H1 (cell line): ENCODE measurements at regions of chr9 and their contacts with region 1.

Region 1: DNA sequence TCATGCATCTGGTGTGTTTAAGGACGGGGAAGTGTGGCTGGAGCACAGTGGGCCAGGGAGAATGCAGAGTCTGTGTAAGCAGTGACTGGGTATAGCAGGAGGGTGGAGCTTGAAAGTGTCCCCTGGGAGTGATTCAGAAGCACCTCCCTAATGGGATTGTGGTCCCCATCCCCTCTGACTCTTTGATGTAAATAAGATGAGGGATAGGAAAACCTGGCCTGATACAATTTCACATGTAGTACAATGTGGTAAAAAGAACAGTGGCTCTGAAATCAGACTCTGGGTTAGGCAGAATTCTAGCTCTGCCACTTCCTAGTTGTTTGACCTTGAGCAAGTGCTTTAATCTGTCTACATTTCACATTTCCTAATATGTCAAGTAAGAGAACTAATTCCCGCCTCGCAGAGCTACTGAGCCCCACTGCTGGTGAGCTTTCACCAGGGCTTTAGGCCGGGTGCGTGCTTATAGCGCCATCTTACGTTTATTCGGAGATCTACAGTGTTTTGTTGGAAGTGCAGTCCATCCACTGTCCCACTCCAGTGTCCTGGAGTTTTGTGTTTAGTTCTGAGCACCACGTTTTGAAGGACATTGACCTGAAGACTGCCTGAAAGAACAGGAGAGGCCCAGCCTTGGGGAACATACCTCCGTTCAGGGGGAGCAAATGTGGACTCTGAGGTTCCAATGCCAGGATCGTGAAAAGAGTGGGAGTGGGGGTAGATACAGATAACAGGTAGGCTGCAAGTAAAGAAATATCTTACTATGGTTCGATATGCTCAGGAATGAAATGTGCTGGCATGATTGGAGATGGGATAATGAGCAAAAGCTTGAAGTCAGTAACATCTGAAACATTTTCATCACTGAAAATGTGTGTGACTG is 51.2 kb upstream of the TESK1 start:
- DNase-seq: peak in 1 of 2 experiments; percentile 72
- H3K4me3 ChIP-seq: no peak overlapping the region
- H3K27ac ChIP-seq: no peak overlapping the region
- H3K4me1 ChIP-seq: peaks cover 0 to 4% (median 0%) of the 10 kb centered on the region in 4 experiments; a peak in 2 of 7 replicates
- H3K27me3 ChIP-seq: no peaks in the 10 kb centered on the region
- CTCF ChIP-seq: peak; percentile 68 to 97 (median 92)
- EP300 ChIP-seq: no peak
- POLR2A ChIP-seq: no peak
- RAD21 ChIP-seq: peak; percentile 99 to 100

Region 2: DNA sequence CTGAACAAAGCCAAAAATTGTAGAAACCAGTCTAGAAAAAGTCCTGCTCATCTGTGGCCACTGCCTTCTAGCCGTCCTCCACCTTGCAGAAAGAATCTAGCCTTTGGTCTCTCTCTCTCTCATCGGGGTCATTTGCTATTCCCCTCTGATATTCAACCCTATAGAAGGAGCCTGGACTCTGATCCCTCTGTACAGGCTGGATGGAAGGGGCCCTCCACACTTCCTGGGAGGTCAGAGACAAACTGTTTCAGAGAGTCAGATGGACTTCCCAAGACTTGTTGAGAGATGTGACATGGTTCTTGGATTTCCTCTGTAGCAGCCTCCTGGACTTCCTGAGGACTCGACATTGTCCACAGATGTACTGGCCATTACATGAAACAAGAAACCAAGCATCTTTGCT is 149.0 kb before region 1 on chr9:
- CTCF ChIA-PET with region 1: no interaction called
- POLR2A ChIA-PET with region 1: no interaction called
- DNase-seq: peak in 1 of 2 experiments; percentile 10
- H3K4me3 ChIP-seq: no peak overlapping the region
- H3K27ac ChIP-seq: no peak overlapping the region
- H3K4me1 ChIP-seq: peaks cover 0 to 7% (median 5%) of the 10 kb centered on the region in 4 experiments; a peak in 5 of 7 replicates
- H3K27me3 ChIP-seq: no peaks in the 10 kb centered on the region
- CTCF ChIP-seq: no peak
- EP300 ChIP-seq: no peak
- POLR2A ChIP-seq: no peak
- RAD21 ChIP-seq: no peak

Region 3: GRCh38 chr9:35452481-35452880 is 101.4 kb before region 1 on chr9:
- CTCF ChIA-PET with region 1: interaction called, 19 read pairs
- POLR2A ChIA-PET with region 1: no interaction called
- DNase-seq: no peak
- H3K4me3 ChIP-seq: no peak overlapping the region
- H3K27ac ChIP-seq: no peak overlapping the region
- H3K4me1 ChIP-seq: peaks cover 0 to 3% (median 0%) of the 10 kb centered on the region in 4 experiments; a peak in 1 of 7 replicates
- H3K27me3 ChIP-seq: no peaks in the 10 kb centered on the region
- CTCF ChIP-seq: peak; percentile 17 to 63 (median 20); a peak in 3 of 4 replicates
- EP300 ChIP-seq: no peak
- POLR2A ChIP-seq: no peak
- RAD21 ChIP-seq: peak; percentile 29 to 42

Region 4: GRCh38 chr9:35481347-35481975 is 72.4 kb before region 1 on chr9:
- CTCF ChIA-PET with region 1: interaction called, 181 read pairs
- POLR2A ChIA-PET with region 1: no interaction called
- DNase-seq: peak in 1 of 2 experiments; percentile 65
- H3K4me3 ChIP-seq: no peak overlapping the region
- H3K27ac ChIP-seq: no peak overlapping the region
- H3K4me1 ChIP-seq: peaks cover 0 to 3% (median 1%) of the 10 kb centered on the region in 4 experiments; a peak in 1 of 7 replicates
- H3K27me3 ChIP-seq: no peaks in the 10 kb centered on the region
- CTCF ChIP-seq: peak; percentile 66 to 82 (median 75)
- EP300 ChIP-seq: no peak
- POLR2A ChIP-seq: no peak
- RAD21 ChIP-seq: peak; percentile 87 to 90

Region 5: DNA sequence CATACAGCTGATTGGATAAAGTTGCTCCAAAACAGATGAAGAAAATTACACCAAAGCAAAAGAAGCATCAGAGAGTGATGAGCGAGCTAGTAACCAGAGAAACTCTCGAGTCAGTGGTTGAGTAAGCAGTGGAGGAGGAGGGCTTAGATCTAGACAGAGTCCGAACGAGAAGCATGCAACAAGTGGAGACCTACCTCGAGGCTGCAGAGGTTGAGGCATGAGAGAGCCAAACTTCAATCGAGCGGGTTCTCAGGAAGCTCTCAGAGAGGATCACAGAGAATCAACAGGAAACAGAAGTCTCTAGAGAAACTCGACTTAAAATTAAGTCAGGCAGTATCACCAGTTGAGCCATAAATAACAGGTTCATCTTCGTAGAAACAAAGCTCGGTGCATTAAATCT is 57.9 kb before region 1 on chr9:
- CTCF ChIA-PET with region 1: interaction called, 26 read pairs
- POLR2A ChIA-PET with region 1: no interaction called
- DNase-seq: no peak
- H3K4me3 ChIP-seq: no peak overlapping the region
- H3K27ac ChIP-seq: no peak overlapping the region
- H3K4me1 ChIP-seq: no peaks in the 10 kb centered on the region
- H3K27me3 ChIP-seq: 0 out of 7 replicates have a peak, but pooled peaks cover 0 to 1% (median 0%) of the 10 kb centered on the region in 4 experiments
- CTCF ChIP-seq: no peak
- EP300 ChIP-seq: no peak
- POLR2A ChIP-seq: no peak
- RAD21 ChIP-seq: no peak

Region 6: GRCh38 chr9:35518226-35518821 is 35.6 kb before region 1 on chr9:
- CTCF ChIA-PET with region 1: interaction called, 114 read pairs
- POLR2A ChIA-PET with region 1: interaction called, 3 read pairs
- DNase-seq: no peak
- H3K4me3 ChIP-seq: no peak overlapping the region
- H3K27ac ChIP-seq: no peak overlapping the region
- H3K4me1 ChIP-seq: peaks cover 0 to 26% (median 8%) of the 10 kb centered on the region in 4 experiments; a peak in 6 of 7 replicates
- H3K27me3 ChIP-seq: no peaks in the 10 kb centered on the region
- CTCF ChIP-seq: no peak
- EP300 ChIP-seq: peak in 1 of 2 experiments; percentile 13; a peak in 1 of 3 replicates
- POLR2A ChIP-seq: no peak
- RAD21 ChIP-seq: no peak

Region 7: GRCh38 chr9:35538361-35539234 is 15.3 kb before region 1 on chr9:
- CTCF ChIA-PET with region 1: interaction called, 33 read pairs
- POLR2A ChIA-PET with region 1: interaction called, 11 read pairs
- DNase-seq: peak in 1 of 2 experiments; percentile 73
- H3K4me3 ChIP-seq: peak overlapping the region; percentile 37 to 62 (median 46); a peak in 7 of 8 replicates
- H3K27ac ChIP-seq: no peak overlapping the region; the same call in 1 of the 2 replicates
- H3K4me1 ChIP-seq: peaks cover 10 to 22% (median 13%) of the 10 kb centered on the region in 4 experiments
- H3K27me3 ChIP-seq: no peaks in the 10 kb centered on the region
- CTCF ChIP-seq: no peak
- EP300 ChIP-seq: no peak
- POLR2A ChIP-seq: peak in 1 of 2 experiments; percentile 66; a peak in 2 of 3 replicates
- RAD21 ChIP-seq: 0 out of 4 replicates have a peak, but pooled peaks of 1 of the 2 experiments have one; percentile 2

Region 8: DNA sequence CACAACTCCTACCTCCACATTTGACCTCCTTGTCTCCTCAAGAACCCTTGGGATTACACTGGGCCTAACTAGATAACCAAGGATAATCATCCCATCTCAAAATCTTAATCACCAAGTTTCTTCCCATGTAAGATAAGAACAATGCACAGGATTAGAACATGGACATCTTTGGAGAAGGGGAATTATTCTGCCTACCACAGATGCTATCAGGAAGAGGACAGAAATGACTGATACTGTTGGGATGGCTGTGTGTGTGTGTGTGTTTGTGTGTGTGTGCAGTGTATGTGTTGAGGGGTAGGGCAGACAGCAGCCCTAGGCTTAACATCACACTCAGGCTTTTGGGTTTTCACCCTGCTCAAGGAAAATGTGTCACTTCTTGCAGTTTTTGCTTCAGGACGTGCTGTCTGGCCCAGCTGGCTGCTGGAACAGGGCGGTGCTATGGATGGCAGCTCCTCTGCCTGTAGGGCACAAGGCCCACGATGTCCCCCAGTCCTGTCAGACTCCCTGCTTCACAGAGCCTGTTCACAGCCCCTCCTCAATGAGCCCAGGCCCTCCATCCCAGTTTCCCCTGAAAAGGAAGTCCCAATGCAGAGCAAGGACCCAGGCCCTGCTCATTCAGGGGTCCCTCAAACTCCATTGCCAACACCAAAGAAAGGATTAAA is 127.6 kb after region 1 on chr9:
- CTCF ChIA-PET with region 1: no interaction called
- POLR2A ChIA-PET with region 1: no interaction called
- DNase-seq: no peak
- H3K4me3 ChIP-seq: no peak overlapping the region
- H3K27ac ChIP-seq: 0 out of 2 replicates have a peak overlapping the region, but pooled peaks have one; percentile 29
- H3K4me1 ChIP-seq: peaks cover 0 to 6% (median 2%) of the 10 kb centered on the region in 4 experiments; a peak in 2 of 7 replicates
- H3K27me3 ChIP-seq: peaks cover 0 to under 1% (median under 1%) of the 10 kb centered on the region in 4 experiments; a peak in 2 of 7 replicates
- CTCF ChIP-seq: no peak
- EP300 ChIP-seq: no peak
- POLR2A ChIP-seq: peak in 1 of 2 experiments; percentile 35; a peak in 1 of 3 replicates
- RAD21 ChIP-seq: no peak